BJ (cell line): ENCODE measurements at regions of chr10 and their contacts with region 1.

Region 1: DNA sequence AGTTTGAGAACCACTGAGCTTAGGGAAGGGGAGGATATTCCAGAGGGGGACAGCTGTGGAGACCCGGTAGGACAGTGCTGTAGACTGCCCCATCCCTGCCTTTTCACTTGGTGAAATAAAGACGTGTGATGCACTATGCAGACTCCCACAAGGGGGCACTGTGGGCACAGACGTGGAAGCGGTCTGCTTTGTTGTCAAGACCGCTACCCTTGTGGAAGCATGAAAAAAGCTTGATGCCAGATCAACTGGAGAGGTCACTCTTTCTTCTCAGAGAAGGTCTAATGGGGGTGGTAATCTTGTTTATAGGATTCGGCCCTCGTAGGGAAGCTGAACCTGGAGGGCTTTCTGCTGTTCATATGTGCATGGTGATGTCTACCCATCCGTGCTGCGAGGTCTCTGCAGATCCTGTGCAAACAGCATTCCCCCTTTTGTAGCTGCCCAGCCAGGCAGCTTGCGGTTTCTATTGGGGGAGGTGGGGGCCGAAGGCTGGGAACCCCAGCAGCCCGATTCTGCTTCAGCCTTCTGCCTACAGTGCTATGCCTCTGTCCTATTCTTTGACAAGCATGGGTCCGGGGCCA is 13.7 kb downstream of the RPS24 start:
- DNase-seq: no peak
- H3K4me3 ChIP-seq: no peak overlapping the region
- H3K27me3 ChIP-seq: no peaks in the 10 kb centered on the region
- CTCF ChIP-seq: peak; percentile 91

Region 2: GRCh38 chr10:77716482-77717317 is 330.7 kb before region 1 on chr10:
- CTCF ChIA-PET with region 1: no interaction called
- POLR2A ChIA-PET with region 1: no interaction called
- DNase-seq: no peak
- H3K4me3 ChIP-seq: no peak overlapping the region
- H3K27me3 ChIP-seq: no peaks in the 10 kb centered on the region
- CTCF ChIP-seq: no peak

Region 3: GRCh38 chr10:78035025-78035424 is 12.4 kb before region 1 on chr10:
- CTCF ChIA-PET with region 1: interaction called, 19 read pairs
- POLR2A ChIA-PET with region 1: no interaction called
- DNase-seq: no peak
- H3K4me3 ChIP-seq: peak overlapping the region; percentile 86
- H3K27me3 ChIP-seq: no peaks in the 10 kb centered on the region
- CTCF ChIP-seq: no peak

Region 4: GRCh38 chr10:78058562-78058961 is 11.2 kb after region 1 on chr10:
- CTCF ChIA-PET with region 1: interaction called, 10 read pairs
- POLR2A ChIA-PET with region 1: no interaction called
- DNase-seq: no peak
- H3K4me3 ChIP-seq: no peak overlapping the region
- H3K27me3 ChIP-seq: no peaks in the 10 kb centered on the region
- CTCF ChIP-seq: no peak

Region 5: GRCh38 chr10:78066012-78066411 is 18.6 kb after region 1 on chr10:
- CTCF ChIA-PET with region 1: interaction called, 10 read pairs
- POLR2A ChIA-PET with region 1: no interaction called
- DNase-seq: no peak
- H3K4me3 ChIP-seq: no peak overlapping the region
- H3K27me3 ChIP-seq: no peaks in the 10 kb centered on the region
- CTCF ChIP-seq: no peak

Region 6: GRCh38 chr10:78130966-78131710 is 83.7 kb after region 1 on chr10:
- CTCF ChIA-PET with region 1: no interaction called
- POLR2A ChIA-PET with region 1: no interaction called
- DNase-seq: no peak
- H3K4me3 ChIP-seq: no peak overlapping the region
- H3K27me3 ChIP-seq: peaks cover 1% of the 10 kb centered on the region
- CTCF ChIP-seq: no peak

Region 7: GRCh38 chr10:78211561-78212051 is 164.2 kb after region 1 on chr10:
- CTCF ChIA-PET with region 1: interaction called, 11 read pairs
- POLR2A ChIA-PET with region 1: no interaction called
- DNase-seq: no peak
- H3K4me3 ChIP-seq: no peak overlapping the region
- H3K27me3 ChIP-seq: no peaks in the 10 kb centered on the region
- CTCF ChIP-seq: peak; percentile 70

Region 8: GRCh38 chr10:78312197-78313047 is 265.0 kb after region 1 on chr10:
- CTCF ChIA-PET with region 1: interaction called, 15 read pairs
- POLR2A ChIA-PET with region 1: no interaction called
- DNase-seq: no peak
- H3K4me3 ChIP-seq: no peak overlapping the region
- H3K27me3 ChIP-seq: no peaks in the 10 kb centered on the region
- CTCF ChIP-seq: no peak

Region 9: GRCh38 chr10:78657163-78657861 is 609.9 kb after region 1 on chr10:
- CTCF ChIA-PET with region 1: interaction called, 11 read pairs
- POLR2A ChIA-PET with region 1: no interaction called
- DNase-seq: no peak
- H3K4me3 ChIP-seq: no peak overlapping the region
- H3K27me3 ChIP-seq: 0 out of 2 replicates have a peak, but pooled peaks cover 3% of the 10 kb centered on the region
- CTCF ChIP-seq: peak; percentile 87